ENCODE measurements at regions of chr7 and their contacts with region 1.

Region 1: GRCh38 chr7:151687523-151688218 is 168.0 kb upstream of the RHEB start:
- DNase-seq: peak; percentile 35 to 94
- H3K4me3 ChIP-seq: no peak overlapping the region
- H3K27ac ChIP-seq: peak overlapping the region; percentile 86 to 94
- H3K4me1 ChIP-seq: peaks cover 10 to 28% of the 10 kb centered on the region in 2 donors
- H3K27me3 ChIP-seq: no peaks in the 10 kb centered on the region
- CTCF ChIP-seq: peak in 1 of 3 experiments; percentile 7

Region 2: GRCh38 chr7:151649939-151650560 is 37.6 kb before region 1 on chr7:
- intact Hi-C with region 1: loop called (anchors 2 kb)
- DNase-seq: no peak
- H3K4me3 ChIP-seq: no peak overlapping the region
- H3K27ac ChIP-seq: peak overlapping the region; percentile 13 to 32
- H3K4me1 ChIP-seq: peaks cover 7 to 13% of the 10 kb centered on the region in 2 donors
- H3K27me3 ChIP-seq: no peaks in the 10 kb centered on the region
- CTCF ChIP-seq: no peak

Region 3: DNA sequence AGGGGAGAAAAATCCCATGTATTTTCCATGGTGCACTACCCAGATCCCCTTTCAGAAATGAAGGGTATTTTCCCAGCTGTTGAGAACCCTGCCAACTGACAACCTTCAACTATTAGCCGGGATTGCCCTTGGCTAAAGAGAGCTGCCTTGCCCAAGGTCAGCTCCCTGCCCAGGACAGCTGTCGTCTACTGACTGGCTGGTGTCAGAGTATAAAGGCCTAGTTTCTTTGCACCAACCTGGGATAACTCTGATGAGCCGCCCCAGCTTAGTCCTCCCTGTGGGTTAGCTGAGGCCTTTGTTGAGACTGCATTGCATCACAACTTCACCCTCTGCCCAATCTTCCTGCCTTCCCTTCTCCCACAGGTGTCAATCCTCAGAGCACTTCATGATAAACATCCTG is 20.8 kb before region 1 on chr7:
- intact Hi-C with region 1: loop called (anchors 2 kb)
- DNase-seq: peak in 1 of 2 donors; percentile 48
- H3K4me3 ChIP-seq: no peak overlapping the region
- H3K27ac ChIP-seq: peak overlapping the region; percentile 24 to 77
- H3K4me1 ChIP-seq: peaks cover 3 to 14% of the 10 kb centered on the region in 2 donors
- H3K27me3 ChIP-seq: no peaks in the 10 kb centered on the region
- CTCF ChIP-seq: no peak

Region 4: DNA sequence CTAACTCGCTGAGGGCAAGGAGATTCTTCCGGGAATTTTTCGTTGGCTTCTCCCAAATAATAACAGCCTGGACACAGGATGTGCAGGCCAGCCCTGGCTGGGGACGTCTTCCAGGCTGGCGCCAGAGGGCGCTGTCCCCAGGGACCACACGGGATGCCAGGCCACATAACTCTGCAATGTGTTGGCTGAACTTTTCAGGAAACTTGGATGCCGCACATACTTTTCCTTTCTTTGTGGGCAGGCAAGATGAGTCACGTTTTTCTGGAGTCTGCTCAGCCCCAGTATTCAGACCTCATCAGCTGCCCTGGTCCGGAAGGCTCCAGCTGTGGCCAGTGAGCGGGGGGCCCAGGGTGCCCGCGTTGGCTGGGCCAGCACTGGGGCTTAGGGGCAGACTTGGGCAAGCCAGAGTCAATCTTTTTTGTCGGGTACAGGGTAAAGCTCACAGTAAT is 66.5 kb after region 1 on chr7:
- intact Hi-C with region 1: loop called (anchors 2 kb)
- DNase-seq: peak; percentile 64 to 94
- H3K4me3 ChIP-seq: no peak overlapping the region
- H3K27ac ChIP-seq: peak overlapping the region; percentile 81 to 89
- H3K4me1 ChIP-seq: peaks cover 9 to 48% of the 10 kb centered on the region in 2 donors
- H3K27me3 ChIP-seq: no peaks in the 10 kb centered on the region
- CTCF ChIP-seq: peak; percentile 87 to 92 (median 91)

Region 5: DNA sequence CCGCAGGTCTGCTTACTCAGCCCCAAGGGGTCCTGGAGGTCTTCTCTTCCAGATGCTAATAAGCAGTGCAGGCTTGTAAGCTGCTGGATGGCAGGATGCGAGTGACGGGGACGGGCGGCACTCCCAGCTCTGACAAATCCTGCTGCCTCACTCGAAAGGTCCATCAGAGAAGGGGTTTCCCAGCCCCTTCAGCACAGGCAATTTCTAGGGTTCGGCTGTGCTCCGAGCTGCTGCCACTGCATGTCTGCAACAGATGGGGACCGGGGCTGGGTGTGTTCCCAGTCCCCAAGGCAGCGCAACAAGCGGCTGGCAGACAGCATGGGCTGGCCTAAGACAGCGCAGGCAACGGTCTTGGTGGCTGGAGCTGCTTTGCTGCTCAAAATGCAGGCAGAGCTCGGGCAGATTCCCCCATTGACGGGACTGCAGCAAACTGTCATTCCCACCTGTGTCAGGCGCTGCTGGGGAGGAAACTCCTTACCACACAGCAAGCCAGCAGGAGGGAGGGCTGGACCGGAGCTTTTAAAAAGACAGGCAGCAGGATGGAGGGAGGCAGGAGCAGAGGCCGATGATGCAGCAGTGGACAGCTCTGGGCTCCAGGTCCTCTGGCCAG is 126.8 kb after region 1 on chr7:
- intact Hi-C with region 1: no loop called
- DNase-seq: no peak
- H3K4me3 ChIP-seq: no peak overlapping the region
- H3K27ac ChIP-seq: no peak overlapping the region
- H3K4me1 ChIP-seq: no peaks in the 10 kb centered on the region
- H3K27me3 ChIP-seq: no peaks in the 10 kb centered on the region
- CTCF ChIP-seq: no peak

Measured in ascending aorta (tissue), 2 donors.